Breast epithelium (tissue), 4 donors: ENCODE measurements at regions of chr14 and their contacts with region 1.

Region 1: GRCh38 chr14:52821805-52822250 is 30.4 kb upstream of the GNPNAT1 start:
- DNase-seq: no peak
- H3K4me3 ChIP-seq: no peak overlapping the region
- H3K27ac ChIP-seq: no peak overlapping the region
- H3K4me1 ChIP-seq: no peaks in the 10 kb centered on the region
- H3K27me3 ChIP-seq: no peaks in the 10 kb centered on the region
- CTCF ChIP-seq: no peak
- POLR2A ChIP-seq: no peak

Region 2: DNA sequence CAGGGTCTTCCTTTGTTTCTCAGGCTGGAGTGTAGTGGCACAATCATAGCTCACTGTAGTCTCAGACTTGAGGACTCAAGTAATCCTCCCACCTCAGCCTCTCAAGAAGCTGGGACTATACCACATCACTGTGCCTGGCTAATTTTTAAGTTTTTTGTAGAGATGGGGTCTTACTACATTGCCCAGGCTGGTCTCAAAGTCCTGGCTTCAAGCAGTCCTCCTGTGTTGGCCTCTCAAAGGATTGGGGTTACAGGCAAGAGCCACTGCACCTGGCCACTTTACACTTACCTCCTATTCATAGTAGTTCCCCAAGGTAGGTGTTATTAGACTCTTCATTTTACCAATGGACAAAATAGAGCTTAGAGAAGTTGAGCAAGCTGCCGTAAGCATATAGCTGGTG is 62.7 kb before region 1 on chr14:
- intact Hi-C with region 1: no loop called
- DNase-seq: no peak
- H3K4me3 ChIP-seq: no peak overlapping the region
- H3K27ac ChIP-seq: no peak overlapping the region
- H3K4me1 ChIP-seq: no peaks in the 10 kb centered on the region
- H3K27me3 ChIP-seq: no peaks in the 10 kb centered on the region
- CTCF ChIP-seq: no peak
- POLR2A ChIP-seq: no peak

Region 3: GRCh38 chr14:52848626-52849025 is 26.8 kb after region 1 on chr14:
- intact Hi-C with region 1: loop called (anchors 2 kb)
- DNase-seq: no peak
- H3K4me3 ChIP-seq: no peak overlapping the region
- H3K27ac ChIP-seq: no peak overlapping the region
- H3K4me1 ChIP-seq: no peaks in the 10 kb centered on the region
- H3K27me3 ChIP-seq: no peaks in the 10 kb centered on the region
- CTCF ChIP-seq: no peak
- POLR2A ChIP-seq: no peak